Naive thymus-derived CD8-positive, alpha-beta T cell (primary cell): ENCODE measurements at regions of chr12 and their contacts with region 1.

Region 1: GRCh38 chr12:55073043-55074022 is 52.9 kb upstream of the OR9K2 start:
- DNase-seq: peak; percentile 57 to 89 (median 74)
- ATAC-seq: peak; percentile 63 to 73
- H3K4me3 Mint-ChIP-seq: no peak overlapping the region
- H3K27ac Mint-ChIP-seq: no peak overlapping the region
- H3K4me1 Mint-ChIP-seq: peaks cover 8 to 12% (median 11%) of the 10 kb centered on the region in 4 donors
- H3K27me3 Mint-ChIP-seq: peaks cover 9 to 30% (median 22%) of the 10 kb centered on the region in 5 donors

Region 2: GRCh38 chr12:54853995-54854566 is 219.3 kb before region 1 on chr12 and contains the start of gene MUCL1:
- POLR2A ChIA-PET with region 1: interaction called, 10 read pairs
- DNase-seq: peak; percentile 9 to 84 (median 72)
- ATAC-seq: peak; percentile 100
- H3K4me3 Mint-ChIP-seq: no peak within 1 kb of the TSS
- H3K27ac Mint-ChIP-seq: peak within 1 kb of the TSS in 2 of 10 donors; percentile 54 to 69
- H3K4me1 Mint-ChIP-seq: peaks cover 2 to 8% (median 5%) of the 10 kb centered on the region in 4 donors
- H3K27me3 Mint-ChIP-seq: no peaks in the 10 kb centered on the region
- polyA plus RNA-seq, gene MUCL1: not detected

Region 3: DNA sequence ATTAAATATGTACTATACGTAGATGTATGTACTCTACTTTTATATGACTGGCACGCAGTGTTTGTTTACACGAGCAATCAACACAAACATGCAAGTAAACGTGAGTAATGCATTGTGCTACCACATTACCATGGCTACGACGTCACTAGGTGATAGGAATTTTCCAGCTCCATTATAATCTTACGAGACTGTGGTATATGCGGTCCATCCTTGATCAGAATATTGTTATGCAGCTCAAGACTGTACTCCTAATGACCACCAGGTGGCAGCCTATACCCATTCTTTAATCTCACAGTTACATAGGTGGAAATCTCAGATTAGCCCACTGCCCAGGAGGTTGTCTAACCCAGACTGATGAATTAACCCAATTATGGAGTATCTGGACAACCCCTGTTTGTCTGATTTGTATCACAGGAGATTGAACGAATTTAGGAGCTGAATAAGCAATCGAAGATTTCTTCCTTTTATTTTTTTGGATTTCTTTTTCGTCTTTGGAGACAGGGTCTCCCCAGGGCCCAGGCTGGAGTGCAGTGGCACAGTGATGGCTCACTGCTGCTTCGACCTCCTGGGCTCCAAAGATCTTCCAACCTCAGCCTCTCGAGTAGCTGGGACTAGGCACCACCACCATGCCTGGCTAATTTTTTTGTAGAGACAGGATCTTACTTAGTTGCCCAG is 80.0 kb before region 1 on chr12:
- POLR2A ChIA-PET with region 1: interaction called, 44 read pairs
- DNase-seq: peak in 9 of 10 donors; percentile 49 to 82 (median 64)
- ATAC-seq: peak; percentile 74 to 75
- H3K4me3 Mint-ChIP-seq: peak overlapping the region in 3 of 10 donors; percentile 0 to 22 (median 6)
- H3K27ac Mint-ChIP-seq: peak overlapping the region in 8 of 10 donors; percentile 12 to 99 (median 58)
- H3K4me1 Mint-ChIP-seq: peaks cover 39 to 62% (median 50%) of the 10 kb centered on the region in 4 donors
- H3K27me3 Mint-ChIP-seq: no peaks in the 10 kb centered on the region

Region 4: GRCh38 chr12:55043542-55043941 is 29.8 kb before region 1 on chr12:
- POLR2A ChIA-PET with region 1: no interaction called
- DNase-seq: no peak
- ATAC-seq: no peak
- H3K4me3 Mint-ChIP-seq: peak overlapping the region in 1 of 10 donors; percentile 20
- H3K27ac Mint-ChIP-seq: no peak overlapping the region
- H3K4me1 Mint-ChIP-seq: peaks cover 17 to 31% (median 19%) of the 10 kb centered on the region in 4 donors
- H3K27me3 Mint-ChIP-seq: peaks cover 0 to 3% (median 0%) of the 10 kb centered on the region in 5 donors